CD4-positive, alpha-beta memory T cell (primary cell): ENCODE measurements at regions of chr4 and their contacts with region 1.

Region 1: DNA sequence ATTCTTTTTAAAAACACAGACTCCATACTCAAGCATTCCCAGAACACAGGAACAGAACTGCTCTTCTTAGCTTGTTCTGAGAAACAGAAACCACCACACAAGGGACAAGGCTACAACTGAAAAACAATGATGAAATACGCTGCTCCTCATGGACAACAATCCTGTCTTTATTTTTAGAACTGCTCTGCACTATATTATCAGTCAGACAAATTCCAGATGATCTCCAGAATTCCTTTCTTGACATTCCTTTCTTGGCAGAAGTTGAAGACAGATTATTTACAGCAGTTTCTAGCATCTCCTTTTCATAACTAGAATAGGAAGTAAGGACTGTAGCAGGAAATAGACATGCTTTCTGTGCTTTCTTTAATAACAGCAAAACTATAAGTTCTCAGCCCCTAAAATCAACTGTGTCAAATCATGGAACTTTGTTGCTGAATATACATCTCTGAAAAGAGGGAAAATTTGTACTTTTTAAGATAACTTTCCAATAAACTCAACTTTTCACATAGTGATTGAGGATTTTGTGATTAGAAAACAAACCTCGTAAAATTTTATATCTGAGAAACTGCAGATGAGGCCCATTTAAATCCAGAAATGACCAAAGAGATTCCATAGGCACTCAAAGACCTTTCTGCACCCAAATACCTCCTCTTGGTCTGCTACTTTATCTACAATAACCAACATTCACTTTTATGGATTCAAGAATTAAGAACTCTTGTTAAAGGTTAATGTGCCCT is 35.9 kb downstream of the ANTXR2 start:
- DNase-seq: no peak
- H3K4me3 ChIP-seq: no peak overlapping the region
- H3K4me3 Mint-ChIP-seq: peak overlapping the region; percentile 62 to 91 (median 78)
- H3K27ac ChIP-seq: peak overlapping the region; percentile 42
- H3K27ac Mint-ChIP-seq: peak overlapping the region; percentile 84 to 96 (median 91)
- H3K4me1 ChIP-seq: peaks cover 47% of the 10 kb centered on the region
- H3K4me1 Mint-ChIP-seq: peaks cover 29 to 66% (median 41%) of the 10 kb centered on the region in 4 donors
- H3K27me3 ChIP-seq: no peaks in the 10 kb centered on the region
- H3K27me3 Mint-ChIP-seq: no peaks in the 10 kb centered on the region

Region 2: GRCh38 chr4:79917246-79917645 is 119.9 kb before region 1 on chr4:
- CTCF ChIA-PET with region 1: no interaction called
- POLR2A ChIA-PET with region 1: no interaction called
- intact Hi-C with region 1: loop called (anchors 10 kb)
- DNase-seq: peak; percentile 31 to 35 (median 32)
- H3K4me3 ChIP-seq: no peak overlapping the region
- H3K4me3 Mint-ChIP-seq: no peak overlapping the region
- H3K27ac ChIP-seq: no peak overlapping the region
- H3K27ac Mint-ChIP-seq: peak overlapping the region in 1 of 7 donors; percentile 71
- H3K4me1 ChIP-seq: peaks cover 11% of the 10 kb centered on the region
- H3K4me1 Mint-ChIP-seq: peaks cover 5 to 26% (median 13%) of the 10 kb centered on the region in 4 donors
- H3K27me3 ChIP-seq: no peaks in the 10 kb centered on the region
- H3K27me3 Mint-ChIP-seq: no peaks in the 10 kb centered on the region

Region 3: GRCh38 chr4:80058740-80059139 is 21.6 kb after region 1 on chr4:
- CTCF ChIA-PET with region 1: no interaction called
- POLR2A ChIA-PET with region 1: no interaction called
- intact Hi-C with region 1: loop called (anchors 2 kb)
- DNase-seq: peak; percentile 75 to 90 (median 86)
- H3K4me3 ChIP-seq: peak overlapping the region in 1 of 2 donors; percentile 13
- H3K4me3 Mint-ChIP-seq: peak overlapping the region; percentile 74 to 95 (median 84)
- H3K27ac ChIP-seq: peak overlapping the region; percentile 85
- H3K27ac Mint-ChIP-seq: peak overlapping the region; percentile 97 to 100 (median 99)
- H3K4me1 ChIP-seq: peaks cover 65% of the 10 kb centered on the region
- H3K4me1 Mint-ChIP-seq: peaks cover 37 to 79% (median 54%) of the 10 kb centered on the region in 4 donors
- H3K27me3 ChIP-seq: no peaks in the 10 kb centered on the region
- H3K27me3 Mint-ChIP-seq: no peaks in the 10 kb centered on the region